ENCODE measurements at regions of chr5 and their contacts with region 1.

Region 1: DNA sequence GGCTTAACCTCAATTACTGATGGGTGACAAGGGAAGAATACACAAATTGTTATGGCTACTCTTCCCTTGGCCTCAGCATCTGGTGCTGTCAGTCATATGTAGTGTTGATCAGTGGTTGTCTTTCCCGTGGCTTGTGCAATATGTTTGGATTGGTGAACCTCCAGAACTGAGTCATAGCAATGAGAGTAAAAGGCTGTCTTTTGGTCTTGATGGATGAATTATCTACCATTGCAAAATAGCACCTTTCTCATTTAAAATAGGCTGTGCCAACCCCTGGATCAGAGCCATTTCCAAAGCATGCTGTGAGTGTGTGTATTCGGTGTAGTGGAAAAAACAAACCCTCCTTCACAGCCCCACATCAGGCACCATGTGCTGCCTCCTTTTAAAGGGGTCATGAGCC is 14.6 kb upstream of the F2R start:
- DNase-seq: peak; percentile 24
- H3K4me3 ChIP-seq: no peak overlapping the region
- H3K27ac ChIP-seq: no peak overlapping the region
- H3K27me3 ChIP-seq: no peaks in the 10 kb centered on the region
- CTCF ChIP-seq: no peak

Region 2: DNA sequence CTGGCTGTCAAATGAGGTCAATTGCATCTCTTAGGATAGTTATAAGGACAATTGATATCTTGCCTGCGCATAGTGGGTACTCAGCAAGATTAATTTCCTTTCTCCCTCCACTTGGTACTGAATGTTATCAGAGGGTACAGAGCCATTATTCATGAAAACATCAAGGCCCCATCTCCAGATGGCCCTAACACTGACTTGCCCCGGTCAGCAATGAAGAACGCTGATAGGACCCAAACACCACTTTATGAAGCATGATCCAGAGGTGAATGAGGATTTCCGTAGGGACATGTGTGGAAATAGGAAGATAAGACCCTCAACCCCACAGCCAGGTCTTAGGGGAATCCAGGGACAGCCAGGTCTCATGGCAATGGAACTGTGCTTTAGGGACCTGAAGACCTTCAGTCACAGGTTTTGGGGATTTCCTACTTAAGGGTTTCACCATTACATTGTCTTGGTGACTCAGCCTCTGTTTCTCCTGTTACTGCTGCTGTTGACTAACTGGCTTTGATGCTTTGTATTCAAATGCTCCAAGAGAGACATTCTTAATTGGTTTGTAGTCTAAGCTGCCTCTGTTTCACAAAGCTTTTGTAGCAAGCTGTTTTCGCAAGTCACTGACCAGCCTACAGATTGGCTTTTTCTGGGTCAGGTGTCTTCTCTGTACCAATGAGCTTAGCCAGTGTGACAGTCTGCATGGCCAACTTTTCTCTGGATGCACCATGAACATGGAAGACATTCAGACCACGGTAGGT is 333.5 kb before region 1 on chr5:
- CTCF ChIA-PET with region 1: no interaction called
- POLR2A ChIA-PET with region 1: no interaction called
- DNase-seq: no peak
- H3K4me3 ChIP-seq: no peak overlapping the region
- H3K27ac ChIP-seq: no peak overlapping the region
- H3K27me3 ChIP-seq: peaks cover 2% of the 10 kb centered on the region
- CTCF ChIP-seq: no peak

Region 3: GRCh38 chr5:76689321-76690036 is 11.8 kb before region 1 on chr5:
- CTCF ChIA-PET with region 1: interaction called, 3 read pairs
- POLR2A ChIA-PET with region 1: interaction called, 15 read pairs
- DNase-seq: peak; percentile 85
- H3K4me3 ChIP-seq: no peak overlapping the region
- H3K27ac ChIP-seq: peak overlapping the region; percentile 90
- H3K27me3 ChIP-seq: no peaks in the 10 kb centered on the region
- CTCF ChIP-seq: no peak

Region 4: GRCh38 chr5:76715736-76716455 is 14.6 kb after region 1 on chr5 and contains the start of gene F2R:
- CTCF ChIA-PET with region 1: interaction called, 11 read pairs
- POLR2A ChIA-PET with region 1: no interaction called
- DNase-seq: no peak
- H3K4me3 ChIP-seq: peak within 1 kb of the TSS; percentile 97
- H3K27ac ChIP-seq: peak within 1 kb of the TSS; percentile 57
- H3K27me3 ChIP-seq: no peaks in the 10 kb centered on the region
- CTCF ChIP-seq: peak; percentile 53
- polyA plus RNA-seq, gene F2R: 289 and 324 TPM in 2 replicates

Measured in AG04450 (cell line).